Activated B cell treated with CpG ODN at 0.5 μM for 24 hours (primary cell): ENCODE measurements at regions of chr11 and their contacts with region 1.

Region 1: GRCh38 chr11:73376160-73376802 is at the start of gene RELT:
- DNase-seq: peak; percentile 99
- ATAC-seq: peak; percentile 89
- H3K4me3 Mint-ChIP-seq: peak within 1 kb of the TSS; percentile 89
- H3K27ac Mint-ChIP-seq: peak within 1 kb of the TSS; percentile 89
- H3K4me1 Mint-ChIP-seq: peaks cover 73% of the 10 kb centered on the region
- H3K27me3 Mint-ChIP-seq: no peaks in the 10 kb centered on the region
- CTCF ChIP-seq: peak; percentile 63
- total RNA-seq, gene RELT: 81.8 and 90.1 TPM in 2 replicates

Region 2: DNA sequence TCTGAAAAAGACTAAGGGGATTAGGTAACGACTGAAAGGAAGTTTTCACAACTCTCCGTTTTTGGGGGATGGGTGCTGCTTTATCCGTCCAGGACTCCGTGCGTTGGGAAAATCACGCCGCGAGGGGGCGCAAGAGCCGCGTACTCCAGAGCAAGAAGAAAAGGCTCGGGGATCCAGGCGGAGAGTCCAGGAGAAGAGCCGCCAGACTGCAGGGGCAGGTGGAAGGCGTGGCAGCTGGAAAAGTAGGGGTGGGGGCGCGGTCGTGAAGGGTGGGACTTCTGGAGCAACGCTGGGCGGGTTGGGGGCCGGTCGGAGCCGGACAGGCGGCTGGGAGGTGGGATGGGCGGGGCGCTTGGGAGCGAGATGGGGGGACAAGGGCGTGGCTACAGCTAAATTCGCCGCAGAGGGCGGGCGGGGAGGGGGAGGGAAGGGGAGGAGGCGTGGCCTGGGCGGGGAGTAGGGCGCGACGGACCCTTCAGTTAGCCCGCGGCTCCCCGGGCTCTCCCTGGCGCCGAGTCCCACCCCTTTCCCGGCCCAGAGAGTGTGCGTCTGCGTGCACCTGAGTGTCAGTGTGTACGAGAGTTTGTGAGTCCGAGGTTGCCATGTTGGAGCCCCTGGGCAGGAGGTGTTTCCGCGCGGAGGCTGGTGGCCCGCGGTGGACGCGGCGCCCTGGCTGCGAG is 68.8 kb before region 1 on chr11:
- CTCF ChIA-PET with region 1: no interaction called
- POLR2A ChIA-PET with region 1: interaction called, 3 read pairs
- intact Hi-C with region 1: loop called (anchors 5 kb)
- DNase-seq: peak; percentile 85
- ATAC-seq: peak; percentile 73
- H3K4me3 Mint-ChIP-seq: peak overlapping the region; percentile 93
- H3K27ac Mint-ChIP-seq: no peak overlapping the region
- H3K4me1 Mint-ChIP-seq: peaks cover 11% of the 10 kb centered on the region
- H3K27me3 Mint-ChIP-seq: peaks cover 8% of the 10 kb centered on the region
- CTCF ChIP-seq: no peak

Region 3: GRCh38 chr11:73366265-73366610 is 10.0 kb before region 1 on chr11:
- CTCF ChIA-PET with region 1: interaction called, 4 read pairs
- POLR2A ChIA-PET with region 1: interaction called, 8 read pairs
- intact Hi-C with region 1: loop called (anchors 1 kb)
- DNase-seq: no peak
- ATAC-seq: peak; percentile 76
- H3K4me3 Mint-ChIP-seq: peak overlapping the region; percentile 12
- H3K27ac Mint-ChIP-seq: peak overlapping the region; percentile 69
- H3K4me1 Mint-ChIP-seq: peaks cover 49% of the 10 kb centered on the region
- H3K27me3 Mint-ChIP-seq: no peaks in the 10 kb centered on the region
- CTCF ChIP-seq: no peak

Region 4: GRCh38 chr11:73393479-73394380 is 17.4 kb after region 1 on chr11:
- CTCF ChIA-PET with region 1: interaction called, 24 read pairs
- POLR2A ChIA-PET with region 1: interaction called, 91 read pairs
- intact Hi-C with region 1: loop called (anchors 1 kb)
- DNase-seq: peak; percentile 52
- ATAC-seq: peak; percentile 82
- H3K4me3 Mint-ChIP-seq: no peak overlapping the region
- H3K27ac Mint-ChIP-seq: peak overlapping the region; percentile 46
- H3K4me1 Mint-ChIP-seq: peaks cover 24% of the 10 kb centered on the region
- H3K27me3 Mint-ChIP-seq: no peaks in the 10 kb centered on the region
- CTCF ChIP-seq: peak; percentile 24

Region 5: DNA sequence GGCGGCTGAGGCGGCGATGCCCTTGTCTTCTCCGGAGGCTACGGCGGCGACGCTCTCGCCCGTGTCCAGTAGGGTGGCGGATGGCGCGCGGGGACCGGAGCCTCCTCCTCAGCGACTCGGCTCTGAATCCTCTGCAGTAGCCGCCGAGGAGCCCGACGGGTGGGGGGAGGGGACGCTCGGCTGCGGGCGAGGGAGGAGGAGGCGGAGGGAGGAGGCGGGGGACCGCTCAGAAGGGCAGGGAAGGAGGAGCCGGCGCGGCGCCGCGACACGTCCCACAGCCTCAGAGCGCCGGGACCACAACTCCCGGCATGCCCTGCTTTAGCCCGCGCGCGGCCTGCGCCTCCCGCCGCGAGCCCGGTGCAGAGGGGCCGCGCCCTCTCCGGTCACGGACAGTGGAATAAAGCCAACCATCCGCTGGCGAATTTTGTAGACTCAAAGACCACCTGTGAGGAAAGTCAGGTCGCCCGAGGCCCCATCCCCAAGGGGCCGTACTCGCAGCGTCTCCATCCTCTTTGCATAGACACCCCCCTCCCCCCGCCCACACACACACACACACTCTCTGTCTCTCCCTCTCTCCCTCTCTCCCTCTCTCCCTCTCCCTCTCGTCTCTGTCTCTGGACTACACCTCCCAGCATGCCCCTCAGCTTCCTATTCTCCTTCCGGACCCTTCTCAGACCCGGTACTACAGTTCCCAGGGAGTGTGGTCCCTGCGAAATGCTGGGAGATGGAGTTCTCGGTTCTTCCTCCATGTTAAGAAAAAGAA is 221.9 kb after region 1 on chr11 and contains the start of gene FAM168A:
- CTCF ChIA-PET with region 1: no interaction called
- POLR2A ChIA-PET with region 1: no interaction called
- intact Hi-C with region 1: loop called (anchors 1 kb)
- DNase-seq: peak; percentile 81
- ATAC-seq: peak; percentile 93
- H3K4me3 Mint-ChIP-seq: peak within 1 kb of the TSS; percentile 92
- H3K27ac Mint-ChIP-seq: peak within 1 kb of the TSS; percentile 88
- H3K4me1 Mint-ChIP-seq: peaks cover 26% of the 10 kb centered on the region
- H3K27me3 Mint-ChIP-seq: no peaks in the 10 kb centered on the region
- CTCF ChIP-seq: no peak
- total RNA-seq, gene FAM168A: 14.1 and 16.5 TPM in 2 replicates

Region 6: DNA sequence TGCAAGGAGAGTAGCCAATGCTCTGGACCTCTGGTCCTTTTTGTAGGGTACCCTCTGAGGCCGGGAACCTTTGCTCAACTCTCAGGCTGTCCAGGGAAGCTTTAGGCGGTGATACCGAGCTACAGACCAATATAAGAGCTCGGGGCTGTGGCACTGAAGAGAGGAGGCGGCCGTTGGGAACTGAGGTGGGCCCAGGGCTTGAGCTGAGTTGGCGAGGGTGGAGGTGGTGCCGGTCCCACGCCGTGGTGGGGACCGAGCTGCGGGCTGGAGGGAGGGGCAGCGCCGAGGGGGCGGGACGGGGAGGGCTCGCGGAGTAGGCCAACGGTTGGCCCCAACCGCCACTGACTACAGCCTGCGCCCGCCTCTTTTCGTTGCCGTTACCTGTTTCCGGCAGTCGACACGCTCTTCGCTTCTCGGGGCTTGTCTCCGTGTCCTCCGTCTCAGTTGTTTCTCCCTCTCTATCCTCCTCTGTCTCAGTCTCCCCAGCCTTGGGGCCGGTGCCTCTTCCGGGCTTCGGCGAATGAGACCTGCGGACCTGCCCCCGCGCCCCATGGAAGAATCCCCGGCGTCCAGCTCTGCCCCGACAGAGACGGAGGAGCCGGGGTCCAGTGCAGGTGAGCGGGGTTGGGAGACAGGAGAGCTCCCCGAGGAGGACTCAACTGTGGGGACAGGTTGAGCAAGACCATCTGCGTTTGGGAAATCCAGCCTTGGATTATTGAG is 1612.4 kb after region 1 on chr11 and contains the start of gene NEU3:
- CTCF ChIA-PET with region 1: no interaction called
- POLR2A ChIA-PET with region 1: no interaction called
- intact Hi-C with region 1: no loop called
- DNase-seq: peak; percentile 69
- ATAC-seq: peak; percentile 97
- H3K4me3 Mint-ChIP-seq: peak within 1 kb of the TSS; percentile 97
- H3K27ac Mint-ChIP-seq: peak within 1 kb of the TSS; percentile 89
- H3K4me1 Mint-ChIP-seq: peaks cover 40% of the 10 kb centered on the region
- H3K27me3 Mint-ChIP-seq: no peaks in the 10 kb centered on the region
- CTCF ChIP-seq: no peak
- total RNA-seq, gene NEU3: 13.2 and 16.5 TPM in 2 replicates